ENCODE measurements at regions of chr19 and their contacts with region 1.

Region 1: GRCh38 chr19:35044317-35045117 is 3.0 kb downstream of the HPN start:
- DNase-seq: no peak
- ATAC-seq: peak; percentile 31; the same call in 1 of the 3 replicates
- H3K4me3 ChIP-seq: no peak overlapping the region
- H3K27ac ChIP-seq: no peak overlapping the region
- H3K4me1 ChIP-seq: peaks cover 4% of the 10 kb centered on the region; the same call in 1 of the 2 replicates
- H3K27me3 ChIP-seq: peaks cover 0 to 2% of the 10 kb centered on the region in 2 experiments; a peak in 3 of 4 replicates
- CTCF ChIP-seq: peak; percentile 80 to 93 (median 90)
- EP300 ChIP-seq: no peak
- POLR2A ChIP-seq: no peak
- RAD21 ChIP-seq: peak; percentile 54

Region 2: GRCh38 chr19:35013031-35013819 is 31.3 kb before region 1 on chr19:
- CTCF ChIA-PET with region 1: interaction called, 13 read pairs
- POLR2A ChIA-PET with region 1: no interaction called
- RAD21 ChIA-PET with region 1: interaction called, 3 read pairs
- SMC1A ChIA-PET with region 1: no interaction called
- in situ Hi-C with region 1: no loop called
- intact Hi-C with region 1: no loop called
- DNase-seq: no peak
- ATAC-seq: peak; percentile 93
- H3K4me3 ChIP-seq: no peak overlapping the region
- H3K27ac ChIP-seq: no peak overlapping the region
- H3K4me1 ChIP-seq: peaks cover 11% of the 10 kb centered on the region
- H3K27me3 ChIP-seq: no peaks in the 10 kb centered on the region
- CTCF ChIP-seq: peak; percentile 95 to 100 (median 97)
- EP300 ChIP-seq: no peak
- POLR2A ChIP-seq: peak; percentile 54
- RAD21 ChIP-seq: peak; percentile 94

Region 3: GRCh38 chr19:35055715-35056179 is 11.2 kb after region 1 on chr19:
- CTCF ChIA-PET with region 1: interaction called, 56 read pairs
- POLR2A ChIA-PET with region 1: interaction called, 4 read pairs
- RAD21 ChIA-PET with region 1: no interaction called
- SMC1A ChIA-PET with region 1: interaction called, 3 read pairs
- in situ Hi-C with region 1: no loop called
- intact Hi-C with region 1: no loop called
- DNase-seq: no peak
- ATAC-seq: peak; percentile 79
- H3K4me3 ChIP-seq: no peak overlapping the region
- H3K27ac ChIP-seq: no peak overlapping the region
- H3K4me1 ChIP-seq: no peaks in the 10 kb centered on the region
- H3K27me3 ChIP-seq: no peaks in the 10 kb centered on the region; a peak in 1 of 4 replicates
- CTCF ChIP-seq: peak; percentile 39 to 56 (median 44); a peak in 4 of 6 replicates
- EP300 ChIP-seq: no peak
- POLR2A ChIP-seq: no peak
- RAD21 ChIP-seq: peak; percentile 16; the same call in 1 of the 2 replicates

Region 4: GRCh38 chr19:35090506-35091237 is 46.2 kb after region 1 on chr19:
- CTCF ChIA-PET with region 1: interaction called, 21 read pairs
- POLR2A ChIA-PET with region 1: no interaction called
- RAD21 ChIA-PET with region 1: interaction called, 4 read pairs
- SMC1A ChIA-PET with region 1: interaction called, 9 read pairs
- in situ Hi-C with region 1: no loop called
- intact Hi-C with region 1: no loop called
- DNase-seq: no peak
- ATAC-seq: peak; percentile 90
- H3K4me3 ChIP-seq: no peak overlapping the region
- H3K27ac ChIP-seq: no peak overlapping the region
- H3K4me1 ChIP-seq: peaks cover 12% of the 10 kb centered on the region
- H3K27me3 ChIP-seq: no peaks in the 10 kb centered on the region; a peak in 1 of 4 replicates
- CTCF ChIP-seq: peak; percentile 55 to 59 (median 56)
- EP300 ChIP-seq: no peak
- POLR2A ChIP-seq: no peak
- RAD21 ChIP-seq: peak; percentile 62

Region 5: GRCh38 chr19:35135389-35135909 is 90.9 kb after region 1 on chr19:
- CTCF ChIA-PET with region 1: interaction called, 20 read pairs
- POLR2A ChIA-PET with region 1: no interaction called
- RAD21 ChIA-PET with region 1: interaction called, 5 read pairs
- SMC1A ChIA-PET with region 1: interaction called, 3 read pairs
- in situ Hi-C with region 1: no loop called
- intact Hi-C with region 1: no loop called
- DNase-seq: no peak
- ATAC-seq: peak; percentile 97
- H3K4me3 ChIP-seq: no peak overlapping the region
- H3K27ac ChIP-seq: no peak overlapping the region
- H3K4me1 ChIP-seq: peaks cover 4% of the 10 kb centered on the region; the same call in 1 of the 2 replicates
- H3K27me3 ChIP-seq: no peaks in the 10 kb centered on the region
- CTCF ChIP-seq: peak; percentile 78 to 92 (median 84)
- EP300 ChIP-seq: no peak
- POLR2A ChIP-seq: no peak
- RAD21 ChIP-seq: peak; percentile 51